Right ventricle myocardium superior (tissue), 1 donor: ENCODE measurements at regions of chr10 and their contacts with region 1.

Region 1: GRCh38 chr10:78657163-78657861 is 411.5 kb upstream of the ZMIZ1 start:
- DNase-seq: peak; percentile 78
- ATAC-seq: peak; percentile 97

Region 2: GRCh38 chr10:78047314-78047891 is 609.9 kb before region 1 on chr10:
- intact Hi-C with region 1: loop called (anchors 10 kb)
- DNase-seq: peak; percentile 91
- ATAC-seq: peak; percentile 85

Region 3: DNA sequence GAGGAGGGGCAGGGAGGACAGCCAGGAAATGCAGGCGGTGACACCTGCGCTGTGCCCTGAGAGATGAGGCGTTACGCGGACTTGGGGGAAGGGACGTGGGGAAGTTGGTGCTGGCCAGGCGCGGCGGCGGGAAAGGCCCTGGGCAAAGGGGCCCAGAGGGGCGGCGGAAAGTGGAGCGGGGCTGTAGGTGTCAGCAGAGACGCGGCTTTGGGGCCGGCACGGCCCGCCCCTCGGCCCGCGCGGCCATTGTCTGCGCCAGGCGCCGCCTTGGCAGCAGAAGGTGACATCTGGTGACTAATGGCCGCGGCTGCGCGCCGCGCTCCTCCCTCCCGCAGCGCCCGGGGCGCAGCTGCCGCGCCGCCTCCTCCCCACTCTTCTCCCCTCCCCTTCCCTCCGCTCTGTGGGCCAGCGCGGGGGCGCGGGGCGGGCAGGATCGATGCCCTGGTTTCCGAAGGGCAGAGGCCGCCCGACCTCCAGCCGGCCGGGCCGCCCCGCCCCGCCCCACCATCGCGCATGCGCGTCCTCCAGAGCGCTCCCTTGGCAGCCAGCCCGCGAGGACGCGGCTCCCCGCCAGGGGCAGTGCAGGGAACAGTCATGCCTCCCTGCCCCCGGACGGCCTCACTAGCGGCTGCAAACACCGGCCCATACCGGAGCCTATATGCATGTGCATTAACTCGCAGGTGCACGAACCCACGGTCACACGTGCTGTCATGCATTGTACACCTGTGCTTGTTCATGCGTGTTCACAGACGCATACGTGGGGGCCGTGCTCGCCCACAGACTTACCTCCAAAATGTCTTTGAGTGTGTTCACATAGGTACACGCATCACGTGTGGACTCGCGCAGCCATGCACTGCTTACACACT is 354.1 kb before region 1 on chr10:
- intact Hi-C with region 1: loop called (anchors 10 kb)
- DNase-seq: peak; percentile 96
- ATAC-seq: peak; percentile 96